Naive thymus-derived CD4-positive, alpha-beta T cell (primary cell): ENCODE measurements at regions of chr16 and their contacts with region 1.

Region 1: DNA sequence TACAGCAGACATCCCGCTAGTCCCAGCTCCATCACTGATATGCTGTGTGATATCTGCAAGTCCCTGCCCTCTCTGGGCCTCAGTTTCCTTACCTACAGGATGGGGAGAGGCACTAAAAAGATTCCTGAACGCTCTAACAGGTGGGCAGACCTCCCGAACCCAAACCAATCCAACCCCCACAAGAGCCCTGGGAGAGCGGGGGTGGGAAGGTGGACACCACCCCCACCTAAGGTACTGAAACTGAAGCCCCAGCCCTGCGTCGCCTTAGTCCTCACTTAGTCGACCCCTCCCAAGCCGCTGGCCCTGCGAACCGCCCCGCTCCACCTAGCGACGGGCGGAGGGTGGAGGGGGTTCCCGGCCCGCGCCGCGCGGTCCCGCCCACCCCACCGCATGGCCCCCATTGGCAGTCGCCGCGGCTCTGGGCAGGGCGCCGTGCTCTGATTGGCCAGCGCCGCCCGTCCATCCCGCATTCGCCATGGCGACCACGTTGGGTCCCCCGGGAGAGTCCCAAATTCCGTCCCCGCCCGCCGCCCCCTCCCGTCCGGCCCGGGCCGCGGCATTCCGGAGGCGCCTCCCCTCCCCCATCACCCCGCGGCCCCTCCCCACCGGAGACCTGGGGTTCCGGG is 578 bp downstream of the CCDC102A start:
- DNase-seq: peak; percentile 77 to 94 (median 87)
- ATAC-seq: peak; percentile 95
- H3K4me3 ChIP-seq: peak overlapping the region; percentile 44
- H3K4me3 Mint-ChIP-seq: peak overlapping the region; percentile 77 to 89 (median 82)
- H3K27ac ChIP-seq: peak overlapping the region; percentile 93
- H3K27ac Mint-ChIP-seq: peak overlapping the region; percentile 82 to 96 (median 94)
- H3K4me1 ChIP-seq: peaks cover 54 to 60% of the 10 kb centered on the region in 2 donors
- H3K4me1 Mint-ChIP-seq: peaks cover 57 to 79% (median 74%) of the 10 kb centered on the region in 7 donors
- H3K27me3 ChIP-seq: no peaks in the 10 kb centered on the region
- H3K27me3 Mint-ChIP-seq: no peaks in the 10 kb centered on the region

Region 2: GRCh38 chr16:57349212-57350031 is 186.4 kb before region 1 on chr16:
- CTCF ChIA-PET with region 1: no interaction called
- POLR2A ChIA-PET with region 1: no interaction called
- intact Hi-C with region 1: no loop called
- DNase-seq: peak in 6 of 9 donors; percentile 4 to 34 (median 20)
- ATAC-seq: peak; percentile 86
- H3K4me3 ChIP-seq: no peak overlapping the region
- H3K4me3 Mint-ChIP-seq: peak overlapping the region in 8 of 10 donors; percentile 10 to 59 (median 22)
- H3K27ac ChIP-seq: no peak overlapping the region
- H3K27ac Mint-ChIP-seq: peak overlapping the region in 1 of 9 donors; percentile 13
- H3K4me1 ChIP-seq: no peaks in the 10 kb centered on the region
- H3K4me1 Mint-ChIP-seq: peaks cover 3 to 28% (median 25%) of the 10 kb centered on the region in 7 donors
- H3K27me3 ChIP-seq: no peaks in the 10 kb centered on the region
- H3K27me3 Mint-ChIP-seq: peaks cover 17 to 42% (median 39%) of the 10 kb centered on the region in 5 donors

Region 3: DNA sequence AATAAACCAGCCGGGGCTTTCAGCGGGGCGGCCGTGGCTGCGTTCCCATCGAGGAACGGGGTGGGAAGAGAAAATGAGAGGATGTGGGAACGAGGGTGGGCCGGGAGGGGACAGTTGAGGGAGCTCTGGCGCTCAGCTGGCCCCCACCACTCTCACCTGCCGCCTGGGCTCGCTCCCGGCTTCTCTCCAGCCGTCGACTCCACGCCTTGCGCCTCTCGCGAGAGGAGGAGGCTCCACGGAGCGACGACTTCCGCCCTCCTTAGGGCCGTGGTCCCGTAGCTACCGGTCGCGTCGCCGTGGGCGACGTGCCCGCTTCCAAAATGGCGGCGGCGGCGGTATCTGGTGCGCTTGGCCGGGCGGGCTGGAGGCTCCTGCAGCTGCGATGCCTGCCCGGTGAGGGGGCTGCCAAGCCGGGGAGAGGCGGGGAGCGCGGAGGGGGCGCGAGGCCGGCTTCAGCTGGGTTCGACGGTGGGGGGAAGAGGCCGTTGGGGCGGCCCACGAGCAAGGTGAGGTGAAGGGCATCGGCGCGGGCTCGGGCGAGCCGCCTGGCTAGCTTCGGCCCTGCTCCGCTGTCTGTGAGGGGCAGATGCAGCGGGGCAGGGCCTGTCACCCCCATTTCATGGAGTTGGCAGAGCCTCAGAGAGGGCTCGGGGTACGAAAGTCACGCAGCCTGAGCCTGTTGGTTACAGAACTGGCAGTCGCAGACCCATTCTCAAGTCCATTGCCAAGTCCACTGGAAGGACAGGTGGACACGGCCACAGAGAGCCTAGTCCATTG is 88.4 kb before region 1 on chr16 and contains the starts of genes CIAPIN1 and COQ9:
- CTCF ChIA-PET with region 1: no interaction called
- POLR2A ChIA-PET with region 1: interaction called, 7 read pairs
- intact Hi-C with region 1: loop called in 1 of 2 experiments (anchors 2 kb)
- DNase-seq: peak; percentile 83 to 94 (median 88)
- ATAC-seq: peak; percentile 99
- H3K4me3 ChIP-seq: peak within 1 kb of the TSS; percentile 84
- H3K4me3 Mint-ChIP-seq: peak within 1 kb of the TSS; percentile 90 to 97 (median 92)
- H3K27ac ChIP-seq: peak within 1 kb of the TSS; percentile 87
- H3K27ac Mint-ChIP-seq: peak within 1 kb of the TSS; percentile 75 to 96 (median 90)
- H3K4me1 ChIP-seq: peaks cover 7 to 17% of the 10 kb centered on the region in 2 donors
- H3K4me1 Mint-ChIP-seq: peaks cover 15 to 64% (median 45%) of the 10 kb centered on the region in 7 donors
- H3K27me3 ChIP-seq: no peaks in the 10 kb centered on the region
- H3K27me3 Mint-ChIP-seq: no peaks in the 10 kb centered on the region
- total RNA-seq, gene CIAPIN1: 33.6 to 52.8 (median 35.8) TPM
- total RNA-seq, gene COQ9: 16.4 to 45.4 (median 36.6) TPM

Region 4: GRCh38 chr16:57462209-57462977 is 73.4 kb before region 1 on chr16 and contains the start of gene POLR2C:
- CTCF ChIA-PET with region 1: no interaction called
- POLR2A ChIA-PET with region 1: interaction called, 11 read pairs
- intact Hi-C with region 1: loop called in 1 of 2 experiments (anchors 1 kb)
- DNase-seq: peak; percentile 84 to 96 (median 92)
- ATAC-seq: peak; percentile 99
- H3K4me3 ChIP-seq: peak within 1 kb of the TSS; percentile 86
- H3K4me3 Mint-ChIP-seq: peak within 1 kb of the TSS; percentile 79 to 100 (median 98)
- H3K27ac ChIP-seq: peak within 1 kb of the TSS; percentile 77
- H3K27ac Mint-ChIP-seq: peak within 1 kb of the TSS; percentile 93 to 100 (median 99)
- H3K4me1 ChIP-seq: peaks cover 17 to 23% of the 10 kb centered on the region in 2 donors
- H3K4me1 Mint-ChIP-seq: peaks cover 19 to 45% (median 35%) of the 10 kb centered on the region in 7 donors
- H3K27me3 ChIP-seq: no peaks in the 10 kb centered on the region
- H3K27me3 Mint-ChIP-seq: no peaks in the 10 kb centered on the region
- total RNA-seq, gene POLR2C: 63.4 to 96.3 (median 81.4) TPM

Region 5: DNA sequence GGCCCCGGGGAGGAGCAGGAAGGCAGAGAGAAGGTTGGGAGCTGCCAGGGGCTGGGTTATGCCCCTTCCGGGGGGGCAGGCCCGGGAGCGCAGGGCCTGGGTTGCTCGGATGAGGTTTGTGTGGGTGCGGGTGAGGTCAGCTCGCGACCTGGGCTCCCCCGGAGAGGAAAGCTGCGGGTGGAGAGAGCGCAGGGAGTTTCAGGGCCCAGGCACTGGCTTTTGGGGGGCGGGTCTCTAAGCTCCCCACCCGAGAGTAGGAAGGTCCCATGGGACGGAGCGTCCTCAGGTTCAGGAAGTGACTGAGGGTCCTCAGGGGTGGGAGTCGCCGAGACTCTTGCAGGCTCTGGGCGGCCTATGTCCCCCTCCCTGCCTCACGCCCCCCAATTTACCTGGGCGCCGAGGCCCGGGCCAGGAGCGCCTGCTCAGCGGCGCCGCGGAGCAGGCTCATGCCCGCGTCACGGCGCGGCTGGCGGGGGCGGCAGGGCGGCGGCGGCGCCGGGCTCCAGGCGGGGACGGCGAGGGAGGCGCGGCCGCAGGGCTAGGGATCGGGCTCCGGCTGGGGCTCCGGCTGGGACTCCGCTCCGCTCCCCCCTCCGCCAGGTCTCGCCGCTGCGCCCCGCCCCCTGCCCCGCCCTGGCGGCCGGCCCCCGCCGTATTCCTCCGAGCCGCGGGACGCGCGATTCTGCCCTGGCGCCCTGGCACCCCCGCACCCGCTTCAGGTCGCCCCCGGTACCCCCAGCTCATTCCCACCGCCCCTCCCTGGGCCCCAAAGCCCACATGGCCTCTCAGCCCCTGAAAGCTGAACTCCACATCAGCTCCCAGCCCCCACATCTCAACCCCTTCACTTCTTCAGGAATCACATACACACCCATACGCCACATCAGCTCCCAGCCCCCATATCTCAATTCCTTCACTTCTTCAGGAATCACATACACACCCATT is 49.6 kb before region 1 on chr16 and contains the start of gene DOK4:
- CTCF ChIA-PET with region 1: interaction called, 12 read pairs
- POLR2A ChIA-PET with region 1: interaction called, 9 read pairs
- intact Hi-C with region 1: loop called (anchors 1 kb)
- DNase-seq: peak; percentile 47 to 87 (median 65)
- ATAC-seq: peak; percentile 97
- H3K4me3 ChIP-seq: peak within 1 kb of the TSS; percentile 59
- H3K4me3 Mint-ChIP-seq: peak within 1 kb of the TSS; percentile 82 to 97 (median 87)
- H3K27ac ChIP-seq: peak within 1 kb of the TSS; percentile 64
- H3K27ac Mint-ChIP-seq: peak within 1 kb of the TSS in 8 of 9 donors; percentile 36 to 86 (median 54)
- H3K4me1 ChIP-seq: peaks cover 9 to 17% of the 10 kb centered on the region in 2 donors
- H3K4me1 Mint-ChIP-seq: peaks cover 11 to 30% (median 19%) of the 10 kb centered on the region in 7 donors
- H3K27me3 ChIP-seq: no peaks in the 10 kb centered on the region
- H3K27me3 Mint-ChIP-seq: peaks cover 0 to 19% (median 0%) of the 10 kb centered on the region in 5 donors
- total RNA-seq, gene DOK4: 2.2 to 4.0 (median 2.9) TPM

Region 6: GRCh38 chr16:57519796-57520360 is 15.9 kb before region 1 on chr16:
- CTCF ChIA-PET with region 1: interaction called, 6 read pairs
- POLR2A ChIA-PET with region 1: interaction called, 6 read pairs
- intact Hi-C with region 1: loop called in 1 of 2 experiments (anchors 1 kb)
- DNase-seq: peak; percentile 61 to 86 (median 73)
- ATAC-seq: peak; percentile 90
- H3K4me3 ChIP-seq: no peak overlapping the region
- H3K4me3 Mint-ChIP-seq: no peak overlapping the region
- H3K27ac ChIP-seq: no peak overlapping the region
- H3K27ac Mint-ChIP-seq: peak overlapping the region in 3 of 9 donors; percentile 62 to 83 (median 76)
- H3K4me1 ChIP-seq: peaks cover 7 to 8% of the 10 kb centered on the region in 2 donors
- H3K4me1 Mint-ChIP-seq: peaks cover 5 to 19% (median 6%) of the 10 kb centered on the region in 7 donors
- H3K27me3 ChIP-seq: no peaks in the 10 kb centered on the region
- H3K27me3 Mint-ChIP-seq: no peaks in the 10 kb centered on the region

Region 7: GRCh38 chr16:57600048-57600835 is 64.4 kb after region 1 on chr16:
- CTCF ChIA-PET with region 1: no interaction called
- POLR2A ChIA-PET with region 1: no interaction called
- intact Hi-C with region 1: loop called in 1 of 2 experiments (anchors 10 kb)
- DNase-seq: no peak
- ATAC-seq: peak; percentile 30
- H3K4me3 ChIP-seq: no peak overlapping the region
- H3K4me3 Mint-ChIP-seq: no peak overlapping the region
- H3K27ac ChIP-seq: no peak overlapping the region
- H3K27ac Mint-ChIP-seq: peak overlapping the region in 2 of 9 donors; percentile 28 to 60
- H3K4me1 ChIP-seq: peaks cover 24 to 46% of the 10 kb centered on the region in 2 donors
- H3K4me1 Mint-ChIP-seq: peaks cover 16 to 56% (median 28%) of the 10 kb centered on the region in 7 donors
- H3K27me3 ChIP-seq: no peaks in the 10 kb centered on the region
- H3K27me3 Mint-ChIP-seq: peaks cover 0 to 2% (median 0%) of the 10 kb centered on the region in 5 donors

Region 8: DNA sequence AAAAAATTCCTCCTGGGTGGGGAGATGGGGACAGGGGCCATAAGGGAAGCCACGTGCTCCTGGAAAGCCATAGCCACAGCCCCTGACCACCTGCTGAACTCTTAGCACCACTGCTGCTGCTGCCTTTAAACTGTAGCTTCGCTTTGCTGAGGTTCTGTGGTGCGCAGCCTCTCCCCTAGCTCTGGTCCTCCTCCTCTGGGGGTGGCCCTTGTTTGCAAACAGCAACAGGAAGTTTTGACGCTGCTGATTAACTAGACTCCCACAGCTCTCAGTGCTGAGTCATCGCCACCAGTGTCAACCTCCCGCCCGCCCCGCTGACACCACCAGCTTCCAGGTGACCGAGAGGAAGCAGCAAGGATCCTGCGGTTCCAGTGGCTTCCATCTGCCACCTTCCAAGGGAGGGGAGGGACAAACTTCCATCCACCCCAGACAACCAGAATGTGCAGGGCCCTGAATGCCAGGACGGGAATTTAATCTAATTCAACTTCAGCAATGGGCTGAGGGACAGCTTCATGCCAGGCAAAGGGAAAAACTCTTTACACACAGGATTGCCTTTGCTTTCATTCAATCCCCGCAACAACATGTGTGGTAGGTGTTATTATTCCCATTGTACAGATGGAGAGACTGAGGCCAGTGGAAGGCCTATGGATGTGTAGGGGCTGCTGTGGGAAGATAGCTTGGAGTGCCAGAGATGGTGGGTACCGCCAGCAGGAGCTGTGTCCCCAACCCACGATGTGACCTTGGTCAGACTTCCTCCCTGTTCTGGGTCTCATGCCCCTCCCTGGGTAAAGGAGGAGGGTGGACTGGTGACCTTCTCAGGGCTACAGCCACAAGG is 274.6 kb after region 1 on chr16:
- CTCF ChIA-PET with region 1: no interaction called
- POLR2A ChIA-PET with region 1: no interaction called
- intact Hi-C with region 1: loop called in 1 of 2 experiments (anchors 5 kb)
- DNase-seq: peak in 2 of 9 donors; percentile 20 to 79
- ATAC-seq: peak; percentile 97
- H3K4me3 ChIP-seq: peak overlapping the region; percentile 37
- H3K4me3 Mint-ChIP-seq: peak overlapping the region in 1 of 10 donors; percentile 70
- H3K27ac ChIP-seq: no peak overlapping the region
- H3K27ac Mint-ChIP-seq: peak overlapping the region in 4 of 9 donors; percentile 10 to 91 (median 16)
- H3K4me1 ChIP-seq: peaks cover 8 to 39% of the 10 kb centered on the region in 2 donors
- H3K4me1 Mint-ChIP-seq: peaks cover 8 to 30% (median 17%) of the 10 kb centered on the region in 7 donors
- H3K27me3 ChIP-seq: no peaks in the 10 kb centered on the region
- H3K27me3 Mint-ChIP-seq: peaks cover 23 to 40% (median 28%) of the 10 kb centered on the region in 5 donors